Dorsolateral prefrontal cortex (tissue), 120 donors: ENCODE measurements at regions of chrX and their contacts with region 1.

Region 1: GRCh38 chrX:49155900-49156837 is 6.4 kb upstream of the MAGIX start:
- DNase-seq: peak; percentile 72 to 91 (median 84)
- H3K4me3 ChIP-seq: peak overlapping the region; percentile 34 to 80 (median 66)
- H3K27ac ChIP-seq: peak overlapping the region; percentile 84 to 99 (median 97)
- H3K27me3 ChIP-seq: peaks cover 0 to 39% (median 3%) of the 10 kb centered on the region in 45 donors
- CTCF ChIP-seq: peak; percentile 45 to 87 (median 72)

Region 2: GRCh38 chrX:48904626-48905025 is 251.5 kb before region 1 on chrX:
- intact Hi-C with region 1: no loop called
- DNase-seq: no peak
- H3K4me3 ChIP-seq: no peak overlapping the region
- H3K27ac ChIP-seq: no peak overlapping the region
- H3K27me3 ChIP-seq: peaks cover 0 to 38% (median 3%) of the 10 kb centered on the region in 45 donors
- CTCF ChIP-seq: no peak

Region 3: DNA sequence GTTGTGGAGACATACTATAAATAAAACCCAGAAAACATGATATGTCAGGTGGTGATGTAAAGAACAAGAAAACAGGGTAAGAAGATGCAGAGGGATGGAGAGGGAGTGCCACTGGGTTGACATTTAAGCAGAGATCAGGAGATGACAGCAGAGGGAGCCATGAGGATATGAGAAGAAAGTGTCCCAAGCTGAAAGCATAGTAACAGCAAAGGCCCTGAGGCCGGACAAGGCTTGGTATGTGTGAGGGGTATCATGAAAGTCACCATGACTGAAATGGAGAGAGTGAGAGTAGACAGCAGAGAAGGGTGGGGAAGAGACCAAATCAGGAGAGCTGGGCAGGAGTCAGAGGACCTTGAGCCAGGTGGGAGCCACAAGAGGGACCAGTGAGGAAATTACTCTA is 36.1 kb before region 1 on chrX:
- intact Hi-C with region 1: loop called in 1 of 2 experiments (anchors 5 kb)
- DNase-seq: no peak
- H3K4me3 ChIP-seq: no peak overlapping the region
- H3K27ac ChIP-seq: no peak overlapping the region
- H3K27me3 ChIP-seq: peaks cover 0 to 58% (median 3%) of the 10 kb centered on the region in 45 donors
- CTCF ChIP-seq: no peak